Sigmoid colon (tissue), 7 donors: ENCODE measurements at regions of chr3 and their contacts with region 1.

Region 1: GRCh38 chr3:134291319-134292254 is 40.9 kb upstream of the RYK start:
- DNase-seq: peak; percentile 97
- H3K4me3 ChIP-seq: no peak overlapping the region
- H3K27ac ChIP-seq: peak overlapping the region; percentile 74 to 81 (median 80)
- H3K4me1 ChIP-seq: peaks cover 0 to 14% (median 10%) of the 10 kb centered on the region in 4 donors
- H3K27me3 ChIP-seq: no peaks in the 10 kb centered on the region
- CTCF ChIP-seq: no peak
- EP300 ChIP-seq: peak in 1 of 4 donors; percentile 26
- POLR2A ChIP-seq: no peak

Region 2: GRCh38 chr3:134059671-134060560 is 231.7 kb before region 1 on chr3:
- intact Hi-C with region 1: no loop called
- DNase-seq: no peak
- H3K4me3 ChIP-seq: no peak overlapping the region
- H3K27ac ChIP-seq: no peak overlapping the region
- H3K4me1 ChIP-seq: no peaks in the 10 kb centered on the region
- H3K27me3 ChIP-seq: no peaks in the 10 kb centered on the region
- CTCF ChIP-seq: no peak
- EP300 ChIP-seq: no peak
- POLR2A ChIP-seq: no peak

Region 3: DNA sequence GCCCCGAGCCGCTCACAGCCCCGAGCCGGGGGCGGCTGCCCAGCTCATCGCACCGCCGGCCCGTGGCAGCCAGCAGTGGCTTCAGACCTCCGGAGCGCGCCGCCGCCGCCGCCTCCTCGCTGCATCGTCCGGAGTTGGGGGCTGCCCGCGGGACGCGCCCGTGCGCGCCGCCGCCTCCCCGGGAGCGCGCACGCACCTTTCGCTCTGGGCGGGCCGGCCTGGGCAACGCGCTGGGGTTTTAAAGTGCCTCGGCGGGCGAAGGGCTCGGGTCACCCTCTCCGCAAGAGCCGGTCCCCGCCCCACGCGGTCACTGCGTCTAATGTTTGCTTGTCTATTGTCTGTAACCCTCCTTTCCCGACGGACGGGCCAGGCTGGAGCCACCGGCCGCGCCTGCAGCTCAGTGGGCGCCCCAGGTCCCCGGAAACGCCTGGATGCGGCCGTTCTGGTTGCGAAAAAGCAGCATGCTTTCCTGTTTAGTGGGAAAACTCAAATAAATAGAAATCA is 40.8 kb before region 1 on chr3 and contains the start of gene RYK:
- intact Hi-C with region 1: loop called (anchors 2 kb)
- DNase-seq: peak; percentile 84
- H3K4me3 ChIP-seq: peak within 1 kb of the TSS; percentile 67 to 93 (median 83)
- H3K27ac ChIP-seq: peak within 1 kb of the TSS; percentile 83 to 95 (median 93)
- H3K4me1 ChIP-seq: peaks cover 0 to 51% (median 36%) of the 10 kb centered on the region in 4 donors
- H3K27me3 ChIP-seq: no peaks in the 10 kb centered on the region
- CTCF ChIP-seq: no peak
- EP300 ChIP-seq: no peak
- POLR2A ChIP-seq: peak; percentile 37 to 48
- total RNA-seq, gene RYK: 92.2 to 148 (median 102) TPM

Region 4: GRCh38 chr3:134373994-134374790 is 82.6 kb after region 1 on chr3 and contains the start of gene AMOTL2:
- intact Hi-C with region 1: no loop called
- DNase-seq: peak; percentile 95
- H3K4me3 ChIP-seq: peak within 1 kb of the TSS; percentile 64 to 78 (median 74)
- H3K27ac ChIP-seq: peak within 1 kb of the TSS; percentile 98 to 100 (median 100)
- H3K4me1 ChIP-seq: peaks cover 0 to 54% (median 50%) of the 10 kb centered on the region in 4 donors
- H3K27me3 ChIP-seq: no peaks in the 10 kb centered on the region
- CTCF ChIP-seq: no peak
- EP300 ChIP-seq: peak in 1 of 4 donors; percentile 52
- POLR2A ChIP-seq: peak; percentile 80 to 94
- total RNA-seq, gene AMOTL2: 43.5 to 112 (median 47.6) TPM